ENCODE measurements at regions of chr11 and their contacts with region 1.

Region 1: DNA sequence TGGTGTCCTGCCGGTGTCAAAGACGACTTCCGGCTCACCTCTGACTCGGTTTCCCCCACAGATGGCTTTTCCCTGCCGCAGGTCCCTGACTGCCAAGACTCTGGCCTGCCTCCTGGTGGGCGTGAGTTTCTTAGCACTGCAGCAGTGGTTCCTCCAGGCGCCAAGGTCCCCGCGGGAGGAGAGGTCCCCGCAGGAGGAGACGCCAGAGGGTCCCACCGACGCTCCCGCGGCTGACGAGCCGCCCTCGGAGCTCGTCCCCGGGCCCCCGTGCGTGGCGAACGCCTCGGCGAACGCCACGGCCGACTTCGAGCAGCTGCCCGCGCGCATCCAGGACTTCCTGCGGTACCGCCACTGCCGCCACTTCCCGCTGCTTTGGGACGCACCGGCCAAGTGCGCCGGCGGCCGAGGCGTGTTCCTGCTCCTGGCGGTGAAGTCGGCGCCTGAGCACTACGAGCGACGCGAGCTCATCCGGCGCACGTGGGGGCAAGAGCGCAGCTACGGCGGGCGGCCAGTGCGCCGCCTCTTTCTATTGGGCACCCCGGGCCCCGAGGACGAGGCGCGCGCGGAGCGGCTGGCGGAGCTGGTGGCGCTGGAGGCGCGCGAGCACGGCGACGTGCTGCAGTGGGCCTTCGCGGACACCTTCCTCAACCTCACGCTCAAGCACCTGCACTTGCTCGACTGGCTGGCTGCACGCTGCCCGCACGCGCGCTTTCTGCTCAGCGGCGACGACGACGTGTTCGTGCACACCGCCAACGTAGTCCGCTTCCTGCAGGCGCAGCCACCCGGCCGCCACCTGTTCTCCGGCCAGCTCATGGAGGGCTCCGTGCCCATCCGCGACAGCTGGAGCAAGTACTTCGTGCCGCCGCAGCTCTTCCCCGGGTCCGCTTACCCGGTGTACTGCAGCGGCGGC is 5.5 kb downstream of the B3GNT6 start:
- DNase-seq: peak; percentile 81
- H3K4me3 ChIP-seq: peak overlapping the region; percentile 42 to 59
- H3K27ac ChIP-seq: no peak overlapping the region
- H3K4me1 ChIP-seq: peaks cover 0 to 3% of the 10 kb centered on the region in 2 experiments; a peak in 1 of 4 replicates
- H3K27me3 ChIP-seq: no peaks in the 10 kb centered on the region
- CTCF ChIP-seq: peak; percentile 65
- EP300 ChIP-seq: no peak
- RAD21 ChIP-seq: peak; percentile 52

Region 2: DNA sequence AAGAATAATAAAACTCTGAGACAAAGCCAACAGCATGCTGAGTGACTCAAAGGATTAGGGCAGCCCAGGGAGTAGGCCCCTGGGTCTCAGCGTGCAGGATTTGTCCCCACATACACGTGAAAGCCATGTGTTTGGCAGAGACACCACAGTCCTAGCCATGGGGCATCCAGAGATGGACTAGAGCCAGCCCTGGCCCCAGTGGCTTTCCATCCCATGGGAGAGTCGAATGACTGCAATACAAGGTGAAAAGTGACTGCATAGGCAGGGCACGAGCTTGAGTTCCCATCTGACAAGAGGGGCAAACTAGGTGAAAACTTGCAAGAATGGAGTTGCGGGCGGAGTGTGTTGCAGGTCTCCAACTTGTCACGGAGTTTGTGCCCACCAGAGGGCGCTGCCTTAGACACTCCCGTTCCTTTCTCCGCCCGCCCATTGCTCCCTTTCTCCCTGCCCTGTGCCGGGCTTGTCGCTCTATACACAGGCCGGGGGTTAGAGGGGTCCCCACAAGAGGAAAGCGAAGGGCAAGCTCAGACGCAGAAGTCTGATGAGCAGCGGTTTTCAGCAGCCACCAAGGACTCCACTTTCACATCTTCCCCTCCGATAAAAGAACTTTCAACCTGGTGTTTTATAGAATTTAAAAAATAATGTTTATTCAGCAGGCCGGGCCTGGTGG is 232.4 kb before region 1 on chr11:
- CTCF ChIA-PET with region 1: interaction called, 23 read pairs
- POLR2A ChIA-PET with region 1: no interaction called
- DNase-seq: peak; percentile 83
- H3K4me3 ChIP-seq: no peak overlapping the region; a peak in 1 of 4 replicates
- H3K27ac ChIP-seq: no peak overlapping the region
- H3K4me1 ChIP-seq: peaks cover 0 to 9% of the 10 kb centered on the region in 2 experiments; a peak in 1 of 4 replicates
- H3K27me3 ChIP-seq: no peaks in the 10 kb centered on the region
- CTCF ChIP-seq: peak; percentile 78
- EP300 ChIP-seq: no peak
- RAD21 ChIP-seq: peak; percentile 51

Region 3: GRCh38 chr11:77009533-77010160 is 30.1 kb before region 1 on chr11:
- CTCF ChIA-PET with region 1: interaction called, 12 read pairs
- POLR2A ChIA-PET with region 1: no interaction called
- DNase-seq: no peak
- H3K4me3 ChIP-seq: no peak overlapping the region
- H3K27ac ChIP-seq: no peak overlapping the region
- H3K4me1 ChIP-seq: no peaks in the 10 kb centered on the region
- H3K27me3 ChIP-seq: no peaks in the 10 kb centered on the region
- CTCF ChIP-seq: no peak
- EP300 ChIP-seq: no peak
- RAD21 ChIP-seq: no peak

Region 4: DNA sequence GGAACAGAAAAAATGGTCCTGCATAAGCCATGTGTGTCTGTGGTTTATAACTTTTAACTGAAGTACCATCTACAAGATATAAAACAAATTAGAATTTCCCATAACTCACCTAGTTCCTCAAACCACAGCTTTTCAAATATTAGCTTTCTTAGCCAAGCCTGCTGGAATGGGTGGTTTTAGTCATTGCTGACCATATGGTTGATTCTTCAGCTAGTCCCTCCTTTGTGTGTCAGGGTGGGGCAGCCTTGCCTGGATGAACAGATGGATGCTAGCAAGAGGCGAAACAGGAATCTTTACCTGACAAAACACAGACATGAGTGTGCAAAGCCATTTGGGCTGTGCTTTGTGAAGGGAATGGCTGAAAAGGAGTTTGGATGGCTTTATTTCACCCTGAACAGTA is 12.5 kb before region 1 on chr11:
- CTCF ChIA-PET with region 1: interaction called, 19 read pairs
- POLR2A ChIA-PET with region 1: no interaction called
- DNase-seq: no peak
- H3K4me3 ChIP-seq: no peak overlapping the region
- H3K27ac ChIP-seq: no peak overlapping the region
- H3K4me1 ChIP-seq: no peaks in the 10 kb centered on the region
- H3K27me3 ChIP-seq: no peaks in the 10 kb centered on the region
- CTCF ChIP-seq: no peak
- EP300 ChIP-seq: no peak
- RAD21 ChIP-seq: no peak

Region 5: GRCh38 chr11:77136074-77136473 is 96.3 kb after region 1 on chr11:
- CTCF ChIA-PET with region 1: no interaction called
- POLR2A ChIA-PET with region 1: no interaction called
- DNase-seq: no peak
- H3K4me3 ChIP-seq: no peak overlapping the region
- H3K27ac ChIP-seq: no peak overlapping the region
- H3K4me1 ChIP-seq: peaks cover 0 to 27% of the 10 kb centered on the region in 2 experiments; a peak in 2 of 4 replicates
- H3K27me3 ChIP-seq: no peaks in the 10 kb centered on the region
- CTCF ChIP-seq: no peak
- EP300 ChIP-seq: no peak
- RAD21 ChIP-seq: no peak

Region 6: GRCh38 chr11:77278595-77279506 is 239.1 kb after region 1 on chr11:
- CTCF ChIA-PET with region 1: no interaction called
- POLR2A ChIA-PET with region 1: no interaction called
- DNase-seq: no peak
- H3K4me3 ChIP-seq: no peak overlapping the region
- H3K27ac ChIP-seq: no peak overlapping the region
- H3K4me1 ChIP-seq: no peaks in the 10 kb centered on the region
- H3K27me3 ChIP-seq: no peaks in the 10 kb centered on the region
- CTCF ChIP-seq: no peak
- EP300 ChIP-seq: no peak
- RAD21 ChIP-seq: no peak